ENCODE measurements at regions of chr12 and their contacts with region 1.

Region 1: GRCh38 chr12:56258057-56258819 is at the start of gene ANKRD52:
- DNase-seq: peak; percentile 19 to 88 (median 80)

Region 2: GRCh38 chr12:56299853-56300643 is 41.8 kb after region 1 on chr12 and contains the start of gene CS:
- intact Hi-C with region 1: loop called (anchors 5 kb)
- DNase-seq: peak; percentile 97 to 100 (median 99)

Region 3: GRCh38 chr12:56785141-56785865 is 527.1 kb after region 1 on chr12:
- intact Hi-C with region 1: no loop called
- DNase-seq: no peak